ENCODE measurements at regions of chr7 and their contacts with region 1.

Region 1: DNA sequence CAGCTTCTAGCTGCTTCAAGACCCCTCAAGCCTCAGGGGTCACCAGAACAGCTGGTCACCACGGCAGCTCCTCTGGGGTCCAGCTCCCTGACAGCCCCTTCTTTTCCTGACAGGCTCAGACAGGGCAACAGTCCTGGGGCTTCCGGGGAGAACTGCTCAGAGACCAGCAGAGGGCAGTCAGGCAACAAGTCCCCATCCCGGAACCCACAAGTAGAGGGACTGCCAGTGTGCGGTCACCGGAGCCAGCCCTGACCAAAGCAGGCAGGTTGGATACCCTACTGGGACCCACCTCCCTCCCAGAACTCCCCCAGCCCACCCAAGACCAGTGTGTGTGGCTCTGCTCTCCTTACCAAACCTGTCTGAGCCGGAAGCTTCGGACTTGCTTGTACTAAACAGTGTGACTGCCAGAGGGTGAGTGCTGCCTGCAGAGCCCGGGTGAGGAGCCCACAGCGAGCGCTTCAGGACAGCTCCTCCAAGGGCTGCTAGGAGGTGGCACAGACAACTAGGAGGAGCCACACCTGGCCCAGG is 40.3 kb downstream of the YKT6 start:
- DNase-seq: peak; percentile 92
- CTCF ChIP-seq: peak; percentile 92

Region 2: DNA sequence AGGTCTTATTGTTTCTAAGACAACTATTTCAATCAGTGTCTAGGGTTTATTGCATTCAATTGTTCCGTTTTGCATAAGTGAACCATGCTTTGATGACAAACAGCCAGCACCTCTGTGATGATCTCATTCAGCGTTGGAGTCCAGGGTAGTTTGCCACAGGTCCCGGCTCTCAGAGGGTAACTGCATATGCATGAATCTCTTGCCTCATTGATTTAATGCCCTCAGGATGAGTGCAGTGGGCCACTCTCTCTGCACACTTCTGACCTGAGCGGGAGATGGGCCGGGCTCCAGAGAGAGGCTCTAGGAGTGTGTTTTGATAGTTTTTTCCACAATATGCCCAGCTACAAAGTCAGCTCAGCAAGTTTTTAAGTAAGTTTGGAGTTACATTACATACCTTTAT is 1044.7 kb before region 1 on chr7:
- in situ Hi-C with region 1: no loop called
- DNase-seq: no peak
- CTCF ChIP-seq: no peak

Region 3: GRCh38 chr7:44477063-44477830 is 236.2 kb after region 1 on chr7:
- in situ Hi-C with region 1: loop called (anchors 10 kb)
- DNase-seq: peak; percentile 56
- CTCF ChIP-seq: peak; percentile 99

Measured in GM13977 (cell line).